Left lung (tissue), 14 donors: ENCODE measurements at regions of chr1 and their contacts with region 1.

Region 1: DNA sequence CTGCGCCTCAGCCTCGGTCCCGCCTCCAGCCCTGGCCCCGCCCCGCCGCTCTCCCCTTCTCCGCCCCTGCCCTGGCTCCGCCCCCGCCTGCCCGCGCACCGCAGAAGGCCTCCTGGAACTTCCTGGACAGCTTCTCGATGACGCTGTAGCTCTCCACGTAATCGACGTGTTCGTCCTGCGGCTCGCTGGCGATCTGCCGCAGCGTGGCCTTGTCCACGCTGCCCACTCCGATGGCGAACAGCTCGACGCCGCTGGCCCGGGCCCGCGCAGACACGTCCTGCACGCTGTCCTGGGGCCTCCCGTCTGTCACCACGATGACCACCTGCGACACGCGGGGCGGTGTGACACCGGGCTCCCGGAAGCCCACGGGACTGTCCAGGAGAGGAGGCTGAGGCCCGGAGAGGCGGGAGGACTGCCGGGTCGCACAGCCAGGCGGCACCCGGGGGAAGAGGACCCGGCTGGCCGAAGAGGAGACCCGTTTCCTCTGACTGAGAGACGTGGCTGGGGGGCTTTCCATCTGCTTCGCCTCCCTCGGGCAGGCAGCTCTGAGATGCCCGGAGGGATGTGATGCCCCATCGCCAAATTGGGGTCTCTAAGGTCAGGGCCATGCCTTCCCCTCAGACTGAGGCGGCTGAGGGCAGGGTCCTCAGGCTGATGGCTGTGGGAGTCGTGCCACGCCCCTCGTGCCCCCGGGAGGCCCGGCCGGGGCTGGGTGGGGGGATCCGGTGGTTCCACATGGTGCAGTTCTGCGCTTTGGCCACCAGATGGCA is 4.6 kb downstream of the MATN1 start:
- DNase-seq: peak; percentile 85 to 94 (median 91)
- ATAC-seq: peak; percentile 85
- H3K4me3 ChIP-seq: peak overlapping the region; percentile 47 to 63
- H3K27ac ChIP-seq: peak overlapping the region; percentile 97 to 98
- H3K4me1 ChIP-seq: peaks cover 0 to 18% of the 10 kb centered on the region in 2 donors
- H3K27me3 ChIP-seq: no peaks in the 10 kb centered on the region
- CTCF ChIP-seq: peak; percentile 98 to 100

Region 2: DNA sequence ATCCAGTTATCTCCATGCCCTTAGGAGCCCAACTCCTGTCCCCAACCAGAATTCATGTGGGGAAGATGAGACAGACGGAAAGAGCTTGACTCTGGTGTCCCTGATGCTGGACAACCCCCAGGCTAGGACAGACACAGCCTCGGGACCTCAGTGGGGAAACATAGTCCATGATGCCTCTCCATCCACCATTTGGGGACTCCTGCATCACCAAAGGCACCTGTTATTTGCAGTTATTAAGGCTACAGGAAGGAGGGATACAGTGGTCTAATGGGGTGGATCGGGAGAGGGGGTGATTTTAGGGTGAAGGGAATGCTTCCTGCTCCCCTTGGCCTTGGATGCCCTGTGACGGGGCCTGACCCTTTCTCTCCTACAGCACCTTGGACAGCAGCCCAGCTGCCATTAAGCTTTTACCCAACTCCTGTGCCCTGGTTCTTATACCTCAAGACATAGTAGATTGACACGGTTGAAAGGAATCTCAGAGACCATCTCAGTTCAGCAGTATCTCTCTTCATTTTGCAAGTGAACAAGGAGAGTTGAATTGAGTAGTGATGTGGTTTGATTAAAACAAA is 107.0 kb before region 1 on chr1:
- intact Hi-C with region 1: no loop called
- DNase-seq: no peak
- ATAC-seq: no peak
- H3K4me3 ChIP-seq: no peak overlapping the region
- H3K27ac ChIP-seq: no peak overlapping the region
- H3K4me1 ChIP-seq: no peaks in the 10 kb centered on the region
- H3K27me3 ChIP-seq: peaks cover 0 to 25% of the 10 kb centered on the region in 2 donors
- CTCF ChIP-seq: no peak

Region 3: GRCh38 chr1:30779294-30780071 is 60.7 kb after region 1 on chr1:
- intact Hi-C with region 1: loop called (anchors 2 to 10 kb)
- DNase-seq: peak; percentile 53 to 97 (median 74)
- ATAC-seq: peak; percentile 78
- H3K4me3 ChIP-seq: no peak overlapping the region
- H3K27ac ChIP-seq: no peak overlapping the region
- H3K4me1 ChIP-seq: peaks cover 0 to 40% of the 10 kb centered on the region in 2 donors
- H3K27me3 ChIP-seq: no peaks in the 10 kb centered on the region
- CTCF ChIP-seq: peak; percentile 92 to 97